Activated T-helper 1 cell treated with anti-CD3 and anti-CD28 coated beads, Interleukin-12 subunit alpha, Interleukin-12 subunit beta, Interleukin-2, Interleukin-4 antibody, amounts not matched to agents 30 ng/mL and 10 ng/mL and 1 ng/mL, durations not matched to agents 14 hours and 24 hours and 36 hours (primary cell): ENCODE measurements at regions of chr16 and their contacts with region 1.

Region 1: DNA sequence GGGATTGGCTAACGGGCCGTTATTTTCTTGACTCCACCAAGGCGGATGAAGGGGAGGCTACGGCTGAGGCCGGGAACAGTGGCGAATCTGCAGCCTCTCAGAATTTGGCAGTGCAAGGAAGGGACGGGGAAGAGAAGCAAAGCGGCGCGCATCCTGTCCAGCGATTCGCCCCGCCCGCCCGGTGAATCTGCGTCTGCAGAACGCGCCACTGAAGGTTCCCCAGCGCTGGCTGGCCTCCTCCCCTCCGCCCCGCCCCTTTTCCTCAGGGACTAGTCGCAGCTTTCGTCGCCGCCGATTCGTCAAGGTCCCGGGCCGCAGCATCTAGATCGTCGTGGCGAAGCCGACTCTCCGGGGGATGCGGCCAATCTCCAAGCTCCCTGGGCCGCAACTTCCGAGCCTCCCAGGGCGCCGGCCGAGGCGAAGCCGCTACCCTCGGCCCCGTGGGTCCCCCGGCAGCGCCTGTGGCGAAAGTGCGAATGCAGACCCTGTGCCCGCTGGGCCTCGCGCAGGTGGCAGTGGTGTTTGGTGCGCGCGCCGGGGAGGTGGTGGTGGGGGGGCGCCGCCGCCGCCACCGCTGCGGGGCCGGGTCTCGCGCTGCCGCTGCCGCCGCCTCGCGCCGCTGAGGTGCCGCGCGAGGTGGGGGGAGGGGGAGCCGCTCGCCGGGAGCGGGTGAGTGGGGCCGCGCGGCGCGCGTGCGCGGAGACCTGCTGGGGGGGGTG is at the start of gene SETD1A:
- DNase-seq: peak; percentile 93
- H3K4me3 Mint-ChIP-seq: peak within 1 kb of the TSS; percentile 96
- H3K27ac Mint-ChIP-seq: peak within 1 kb of the TSS; percentile 97
- H3K4me1 Mint-ChIP-seq: peaks cover 28% of the 10 kb centered on the region
- H3K27me3 Mint-ChIP-seq: no peaks in the 10 kb centered on the region
- total RNA-seq, gene SETD1A: 34.0 and 38.8 TPM in 2 replicates

Region 2: DNA sequence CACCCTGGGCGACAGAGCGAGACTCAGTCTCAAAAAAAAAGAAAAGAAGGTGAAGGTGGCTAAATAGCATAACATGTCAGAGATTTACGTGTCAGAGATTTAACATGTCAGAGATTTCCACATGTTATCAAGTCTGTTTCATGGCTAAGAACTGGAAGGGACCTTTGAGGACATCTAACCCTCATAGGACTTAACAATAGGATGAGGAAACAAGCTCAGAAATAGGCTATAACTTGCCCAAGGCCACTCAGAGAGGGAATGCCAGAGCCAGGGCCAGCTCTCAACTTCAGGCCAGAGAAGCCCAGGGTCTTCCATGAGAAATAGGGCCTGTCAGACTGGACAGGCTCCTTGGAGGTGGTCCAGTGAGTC is 143.8 kb before region 1 on chr16:
- intact Hi-C with region 1: loop called (anchors 1 kb)
- DNase-seq: no peak
- H3K4me3 Mint-ChIP-seq: peak overlapping the region; percentile 92
- H3K27ac Mint-ChIP-seq: peak overlapping the region; percentile 78
- H3K4me1 Mint-ChIP-seq: peaks cover 15% of the 10 kb centered on the region
- H3K27me3 Mint-ChIP-seq: peaks cover 4% of the 10 kb centered on the region

Region 3: GRCh38 chr16:30941600-30942425 is 15.8 kb before region 1 on chr16:
- intact Hi-C with region 1: loop called (anchors 1 kb)
- DNase-seq: peak; percentile 64
- H3K4me3 Mint-ChIP-seq: peak overlapping the region; percentile 56
- H3K27ac Mint-ChIP-seq: no peak overlapping the region
- H3K4me1 Mint-ChIP-seq: peaks cover 28% of the 10 kb centered on the region
- H3K27me3 Mint-ChIP-seq: no peaks in the 10 kb centered on the region

Region 4: GRCh38 chr16:31032736-31033708 is 75.4 kb after region 1 on chr16 and contains the start of gene STX4:
- intact Hi-C with region 1: loop called (anchors 1 kb)
- DNase-seq: peak; percentile 97
- H3K4me3 Mint-ChIP-seq: peak within 1 kb of the TSS; percentile 95
- H3K27ac Mint-ChIP-seq: peak within 1 kb of the TSS; percentile 92
- H3K4me1 Mint-ChIP-seq: peaks cover 24% of the 10 kb centered on the region
- H3K27me3 Mint-ChIP-seq: no peaks in the 10 kb centered on the region
- total RNA-seq, gene STX4: 56.4 and 58.7 TPM in 2 replicates

Region 5: GRCh38 chr16:31117391-31118197 is 160.0 kb after region 1 on chr16 and contains the start of gene KAT8:
- intact Hi-C with region 1: loop called (anchors 1 kb)
- DNase-seq: peak; percentile 95
- H3K4me3 Mint-ChIP-seq: peak within 1 kb of the TSS; percentile 88
- H3K27ac Mint-ChIP-seq: peak within 1 kb of the TSS; percentile 92
- H3K4me1 Mint-ChIP-seq: peaks cover 19% of the 10 kb centered on the region
- H3K27me3 Mint-ChIP-seq: no peaks in the 10 kb centered on the region
- total RNA-seq, gene KAT8: 55.4 and 58.2 TPM in 2 replicates

Region 6: GRCh38 chr16:31179747-31180459 is 222.3 kb after region 1 on chr16 and contains the start of gene FUS:
- intact Hi-C with region 1: loop called (anchors 1 kb)
- DNase-seq: peak; percentile 88
- H3K4me3 Mint-ChIP-seq: peak within 1 kb of the TSS; percentile 98
- H3K27ac Mint-ChIP-seq: peak within 1 kb of the TSS; percentile 99
- H3K4me1 Mint-ChIP-seq: peaks cover 54% of the 10 kb centered on the region
- H3K27me3 Mint-ChIP-seq: no peaks in the 10 kb centered on the region
- total RNA-seq, gene FUS: 950 and 955 TPM in 2 replicates